CD4-positive, alpha-beta T cell (primary cell): ENCODE measurements at regions of chr17 and their contacts with region 1.

Region 1: GRCh38 chr17:48011405-48012150 is 26.0 kb downstream of the COPZ2 start:
- DNase-seq: peak in 11 of 14 experiments; percentile 18 to 68 (median 39)
- ATAC-seq: peak; percentile 76
- H3K4me3 ChIP-seq: peak overlapping the region; percentile 43
- H3K4me3 Mint-ChIP-seq: peak overlapping the region; percentile 71
- H3K27ac ChIP-seq: no peak overlapping the region
- H3K27ac Mint-ChIP-seq: no peak overlapping the region
- H3K4me1 ChIP-seq: peaks cover 14% of the 10 kb centered on the region
- H3K4me1 Mint-ChIP-seq: peaks cover 16% of the 10 kb centered on the region
- H3K27me3 ChIP-seq: peaks cover 32 to 46% of the 10 kb centered on the region in 2 experiments
- H3K27me3 Mint-ChIP-seq: peaks cover 66% of the 10 kb centered on the region
- CTCF ChIP-seq: peak; percentile 46

Region 2: GRCh38 chr17:47987240-47987835 is 24.2 kb before region 1 on chr17:
- CTCF ChIA-PET with region 1: no interaction called
- POLR2A ChIA-PET with region 1: no interaction called
- intact Hi-C with region 1: loop called in 1 of 2 experiments (anchors 2 kb)
- DNase-seq: no peak
- ATAC-seq: no peak
- H3K4me3 ChIP-seq: no peak overlapping the region
- H3K4me3 Mint-ChIP-seq: no peak overlapping the region
- H3K27ac ChIP-seq: no peak overlapping the region
- H3K27ac Mint-ChIP-seq: no peak overlapping the region
- H3K4me1 ChIP-seq: peaks cover 6% of the 10 kb centered on the region
- H3K4me1 Mint-ChIP-seq: no peaks in the 10 kb centered on the region
- H3K27me3 ChIP-seq: no peaks in the 10 kb centered on the region
- H3K27me3 Mint-ChIP-seq: no peaks in the 10 kb centered on the region
- CTCF ChIP-seq: no peak

Region 3: DNA sequence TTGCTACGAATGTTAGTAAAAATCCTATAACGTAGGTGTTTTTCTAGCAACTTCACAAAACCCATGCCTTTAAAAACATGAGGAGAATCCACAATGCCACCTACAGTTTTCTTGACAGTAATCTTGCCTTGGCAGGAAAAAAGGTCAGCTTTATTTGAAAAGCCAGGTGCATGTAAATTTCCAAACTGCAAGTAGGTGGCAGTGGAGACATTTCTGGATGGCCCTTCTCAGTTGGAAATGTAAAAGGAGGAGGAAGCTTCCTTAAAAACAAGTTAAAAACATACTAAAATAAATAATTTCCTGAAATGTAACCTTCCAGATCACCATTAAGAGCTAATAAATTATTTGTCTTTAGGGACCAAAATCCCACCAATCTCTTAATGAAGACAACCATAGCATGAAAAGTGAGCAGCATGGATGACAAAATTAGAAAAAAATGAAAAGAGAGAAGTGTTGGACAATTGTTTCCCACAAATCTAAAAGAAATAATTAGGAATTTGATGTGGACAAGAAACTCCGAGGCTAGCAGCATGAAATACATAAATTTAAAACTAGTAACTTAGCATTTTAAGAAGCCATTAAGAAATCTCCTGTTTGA is 248.2 kb after region 1 on chr17:
- CTCF ChIA-PET with region 1: no interaction called
- POLR2A ChIA-PET with region 1: no interaction called
- intact Hi-C with region 1: no loop called
- DNase-seq: peak in 3 of 14 experiments; percentile 13 to 22 (median 21)
- ATAC-seq: no peak
- H3K4me3 ChIP-seq: no peak overlapping the region
- H3K4me3 Mint-ChIP-seq: no peak overlapping the region
- H3K27ac ChIP-seq: no peak overlapping the region
- H3K27ac Mint-ChIP-seq: no peak overlapping the region
- H3K4me1 ChIP-seq: no peaks in the 10 kb centered on the region
- H3K4me1 Mint-ChIP-seq: peaks cover 15% of the 10 kb centered on the region
- H3K27me3 ChIP-seq: no peaks in the 10 kb centered on the region
- H3K27me3 Mint-ChIP-seq: no peaks in the 10 kb centered on the region
- CTCF ChIP-seq: peak; percentile 42

Region 4: GRCh38 chr17:48351831-48352332 is 340.3 kb after region 1 on chr17:
- CTCF ChIA-PET with region 1: no interaction called
- POLR2A ChIA-PET with region 1: no interaction called
- intact Hi-C with region 1: no loop called
- DNase-seq: peak in 3 of 14 experiments; percentile 57 to 71 (median 68)
- ATAC-seq: peak; percentile 76
- H3K4me3 ChIP-seq: no peak overlapping the region
- H3K4me3 Mint-ChIP-seq: no peak overlapping the region
- H3K27ac ChIP-seq: no peak overlapping the region
- H3K27ac Mint-ChIP-seq: no peak overlapping the region
- H3K4me1 ChIP-seq: no peaks in the 10 kb centered on the region
- H3K4me1 Mint-ChIP-seq: peaks cover 27% of the 10 kb centered on the region
- H3K27me3 ChIP-seq: no peaks in the 10 kb centered on the region
- H3K27me3 Mint-ChIP-seq: no peaks in the 10 kb centered on the region
- CTCF ChIP-seq: peak; percentile 93